Head of caudate nucleus (tissue), 42 donors: ENCODE measurements at regions of chr17 and their contacts with region 1.

Region 1: DNA sequence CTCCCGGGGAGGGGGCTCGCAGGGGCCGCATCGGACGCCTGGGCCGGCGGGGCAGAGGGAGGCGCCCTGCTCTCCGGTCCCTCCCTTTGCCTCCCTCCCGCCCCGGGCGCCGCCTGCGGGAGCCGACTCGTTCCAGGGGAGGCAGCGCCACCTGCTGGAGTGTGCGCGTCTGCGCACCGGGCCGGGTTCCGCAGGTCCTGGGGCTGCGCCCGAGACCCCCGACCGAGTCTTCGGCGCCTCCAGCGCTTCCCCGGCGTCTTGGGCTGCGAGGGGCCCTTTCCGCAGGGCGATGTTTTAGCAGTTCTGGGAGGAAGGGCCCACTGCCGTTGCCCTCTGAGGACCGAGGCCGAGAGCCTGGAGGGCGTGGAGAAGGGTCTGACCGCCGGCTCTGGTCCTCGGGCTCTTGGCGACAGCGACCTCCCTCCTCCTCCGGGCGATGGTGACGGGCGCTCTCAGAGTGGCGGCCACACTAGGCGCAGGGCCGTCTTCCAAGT is 106.3 kb downstream of the SEC14L1 start:
- DNase-seq: peak; percentile 61 to 96 (median 87)

Region 2: DNA sequence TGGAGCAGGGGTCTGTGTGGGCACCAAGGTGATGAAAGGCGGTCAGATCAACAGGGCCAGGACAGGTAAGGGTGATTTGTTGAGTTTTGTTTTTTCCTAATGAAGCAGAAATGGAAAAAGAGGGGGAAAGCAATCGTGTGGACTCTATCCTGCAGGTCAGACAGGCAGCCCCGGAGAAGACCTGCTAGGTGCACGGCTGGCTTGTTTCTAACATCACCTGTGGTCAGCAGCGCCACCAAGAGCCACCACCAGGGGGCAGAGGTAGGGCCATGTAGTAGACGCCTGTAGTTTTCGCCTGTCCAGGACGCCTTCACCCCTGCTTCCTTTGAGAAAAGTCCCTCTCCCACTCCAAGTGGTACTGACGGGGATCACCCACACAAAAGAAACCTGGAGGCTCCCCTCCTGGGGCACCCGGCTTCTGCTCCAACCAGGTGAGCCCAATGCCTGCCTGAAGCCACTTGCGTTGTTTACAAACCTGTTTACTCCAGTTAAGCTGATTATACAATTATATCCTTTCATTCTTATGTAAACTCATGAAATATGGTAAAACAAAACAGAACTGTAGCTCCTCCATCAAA is 160.6 kb before region 1 on chr17:
- intact Hi-C with region 1: loop called (anchors 2 kb)
- DNase-seq: peak; percentile 40 to 93 (median 84)

Region 3: DNA sequence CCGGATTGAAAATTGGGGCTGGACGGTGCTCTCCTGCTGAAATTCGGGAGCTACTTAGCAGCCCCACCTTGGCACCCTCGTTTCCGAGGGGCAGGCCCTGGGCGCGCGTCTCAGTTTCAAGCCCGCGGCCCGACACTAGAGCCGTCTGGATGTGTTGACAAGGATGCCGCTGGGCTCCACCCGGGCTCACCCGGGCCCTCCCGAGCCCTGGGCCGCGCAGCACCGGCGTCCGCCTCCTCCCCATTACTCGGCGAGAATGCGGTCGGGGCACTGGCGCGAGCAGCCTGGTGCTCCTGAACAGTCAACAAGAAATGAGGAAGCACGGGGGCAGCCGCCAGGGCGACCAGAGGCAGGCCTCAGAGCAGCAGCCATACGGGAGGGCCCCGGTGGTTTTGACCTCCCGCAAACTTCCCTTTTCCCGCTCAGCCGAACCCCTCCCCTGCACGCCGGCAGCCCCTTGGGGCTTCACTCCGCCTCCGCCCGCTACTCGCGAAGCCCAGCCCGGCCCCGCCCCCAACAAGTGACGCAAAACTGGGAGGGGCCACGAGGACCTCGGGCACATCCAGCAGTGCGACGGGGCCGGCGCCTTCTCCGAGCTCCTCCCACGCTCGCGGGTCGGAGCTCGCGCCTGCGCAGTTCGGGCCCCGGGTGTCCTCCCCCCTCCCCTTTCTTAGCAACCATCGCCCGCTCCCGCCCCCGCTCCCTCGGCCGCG is 106.8 kb before region 1 on chr17:
- intact Hi-C with region 1: no loop called
- DNase-seq: peak; percentile 96 to 100 (median 99)